Endothelial cell of umbilical vein (primary cell): ENCODE measurements at regions of chr3 and their contacts with region 1.

Region 1: DNA sequence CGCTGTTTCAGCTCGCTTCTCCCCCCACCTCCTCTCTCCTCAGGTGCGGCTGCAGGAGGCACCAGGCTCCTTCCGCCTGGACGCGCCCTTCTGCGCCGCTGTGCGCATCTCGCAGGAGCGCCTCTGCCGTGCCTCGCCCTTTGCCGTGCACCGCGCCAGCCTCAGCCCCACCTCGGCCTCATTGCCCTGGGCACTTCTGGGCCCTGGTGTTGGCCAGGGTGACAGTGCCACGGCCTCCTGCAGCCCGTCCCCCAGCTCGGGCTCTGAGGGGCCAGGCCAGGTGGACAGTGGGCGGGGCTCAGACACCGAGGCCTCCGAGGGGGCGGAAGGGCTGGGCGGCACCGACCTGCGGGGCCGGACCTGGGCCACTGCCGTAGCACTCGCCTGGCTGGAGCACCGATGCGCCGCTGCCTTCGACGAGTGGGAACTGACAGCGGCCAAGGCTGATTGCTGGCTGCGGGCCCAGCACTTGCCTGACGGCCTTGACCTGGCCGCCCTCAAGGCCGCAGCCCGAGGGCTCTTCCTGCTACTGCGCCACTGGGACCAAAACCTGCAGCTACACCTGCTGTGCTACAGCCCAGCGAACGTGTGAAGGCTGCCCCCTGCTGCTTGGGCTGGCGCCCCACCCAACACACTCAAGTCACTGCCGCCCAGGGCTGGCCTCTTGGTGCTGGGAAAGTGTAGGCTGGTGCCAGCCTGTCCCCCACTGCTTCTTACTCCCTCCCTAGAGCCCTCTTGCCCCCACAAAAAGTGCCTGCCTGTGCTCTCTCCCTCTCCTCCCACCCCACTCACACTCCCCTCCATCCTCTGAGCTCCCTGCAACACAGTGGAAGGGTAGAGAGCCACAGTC is 7.1 kb downstream of the ALG3 start:
- DNase-seq: peak; percentile 48
- H3K4me3 ChIP-seq: no peak overlapping the region
- H3K27ac ChIP-seq: no peak overlapping the region
- H3K4me1 ChIP-seq: no peaks in the 10 kb centered on the region
- H3K27me3 ChIP-seq: no peaks in the 10 kb centered on the region
- CTCF ChIP-seq: peak; percentile 50 to 83
- POLR2A ChIP-seq: no peak

Region 2: GRCh38 chr3:183802989-183803388 is 438.7 kb before region 1 on chr3:
- CTCF ChIA-PET with region 1: no interaction called
- POLR2A ChIA-PET with region 1: no interaction called
- dilution Hi-C with region 1: no loop called
- intact Hi-C with region 1: no loop called
- DNase-seq: no peak
- H3K4me3 ChIP-seq: no peak overlapping the region
- H3K27ac ChIP-seq: no peak overlapping the region
- H3K4me1 ChIP-seq: no peaks in the 10 kb centered on the region
- H3K27me3 ChIP-seq: no peaks in the 10 kb centered on the region
- CTCF ChIP-seq: no peak
- POLR2A ChIP-seq: no peak

Region 3: GRCh38 chr3:184145111-184145524 is 96.6 kb before region 1 on chr3:
- CTCF ChIA-PET with region 1: interaction called, 16 read pairs
- POLR2A ChIA-PET with region 1: no interaction called
- dilution Hi-C with region 1: no loop called
- intact Hi-C with region 1: no loop called
- DNase-seq: peak; percentile 39
- H3K4me3 ChIP-seq: no peak overlapping the region
- H3K27ac ChIP-seq: no peak overlapping the region
- H3K4me1 ChIP-seq: no peaks in the 10 kb centered on the region
- H3K27me3 ChIP-seq: no peaks in the 10 kb centered on the region
- CTCF ChIP-seq: peak; percentile 31 to 36
- POLR2A ChIP-seq: no peak

Region 4: DNA sequence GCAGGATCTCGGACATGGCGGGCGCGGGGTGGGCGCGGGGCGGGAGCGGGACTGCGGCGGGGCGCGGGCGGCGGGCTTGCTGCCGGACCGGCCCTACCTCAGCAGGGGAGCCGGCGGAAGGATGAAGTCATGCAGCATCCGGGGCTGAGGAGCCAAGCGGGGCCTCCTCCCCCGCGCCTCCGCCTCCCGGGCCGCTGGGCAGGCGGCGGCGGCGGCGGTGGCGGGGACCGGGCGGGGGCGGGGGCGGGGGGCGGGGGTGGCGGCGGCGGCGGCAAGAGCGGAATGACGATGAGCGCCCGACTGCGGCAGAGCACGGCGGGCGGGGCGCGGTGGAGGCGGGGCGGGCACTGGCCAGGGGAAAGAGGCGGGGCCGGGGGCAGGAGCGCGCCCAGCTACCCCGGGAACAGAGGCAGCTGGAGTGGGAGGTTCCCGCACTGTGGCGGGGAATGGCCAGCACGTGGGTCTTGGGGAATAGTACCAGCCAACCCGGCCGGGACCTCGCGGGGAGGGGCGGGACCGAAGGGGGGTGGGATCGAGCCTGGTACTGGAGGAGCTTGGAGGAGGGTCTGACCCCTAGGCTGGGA is 19.7 kb after region 1 on chr3 and contains the start of gene CAMK2N2:
- CTCF ChIA-PET with region 1: interaction called, 16 read pairs
- POLR2A ChIA-PET with region 1: no interaction called
- dilution Hi-C with region 1: no loop called
- intact Hi-C with region 1: loop called (anchors 1 kb)
- DNase-seq: no peak
- H3K4me3 ChIP-seq: peak within 1 kb of the TSS in 2 of 3 experiments; percentile 24 to 28
- H3K27ac ChIP-seq: no peak within 1 kb of the TSS
- H3K4me1 ChIP-seq: peaks cover 13% of the 10 kb centered on the region
- H3K27me3 ChIP-seq: peaks cover 26 to 36% of the 10 kb centered on the region in 2 experiments
- CTCF ChIP-seq: no peak
- POLR2A ChIP-seq: no peak
- total RNA-seq, gene CAMK2N2: not detected in 2 replicates